ENCODE measurements at regions of chr11 and their contacts with region 1.

Region 1: GRCh38 chr11:129910360-129910759 is 15.0 kb upstream of the NFRKB start:
- DNase-seq: no peak
- ATAC-seq: no peak
- H3K4me3 Mint-ChIP-seq: no peak overlapping the region
- H3K27ac Mint-ChIP-seq: no peak overlapping the region
- H3K4me1 Mint-ChIP-seq: peaks cover 6% of the 10 kb centered on the region
- H3K27me3 Mint-ChIP-seq: no peaks in the 10 kb centered on the region

Region 2: GRCh38 chr11:129504956-129505665 is 405.2 kb before region 1 on chr11:
- CTCF ChIA-PET with region 1: no interaction called
- POLR2A ChIA-PET with region 1: no interaction called
- DNase-seq: no peak
- ATAC-seq: no peak
- H3K4me3 Mint-ChIP-seq: no peak overlapping the region
- H3K27ac Mint-ChIP-seq: no peak overlapping the region
- H3K4me1 Mint-ChIP-seq: no peaks in the 10 kb centered on the region
- H3K27me3 Mint-ChIP-seq: no peaks in the 10 kb centered on the region

Region 3: GRCh38 chr11:129922674-129923073 is 12.3 kb after region 1 on chr11:
- CTCF ChIA-PET with region 1: interaction called, 11 read pairs
- POLR2A ChIA-PET with region 1: no interaction called
- DNase-seq: no peak
- ATAC-seq: no peak
- H3K4me3 Mint-ChIP-seq: no peak overlapping the region
- H3K27ac Mint-ChIP-seq: no peak overlapping the region
- H3K4me1 Mint-ChIP-seq: peaks cover 19% of the 10 kb centered on the region
- H3K27me3 Mint-ChIP-seq: no peaks in the 10 kb centered on the region

Region 4: DNA sequence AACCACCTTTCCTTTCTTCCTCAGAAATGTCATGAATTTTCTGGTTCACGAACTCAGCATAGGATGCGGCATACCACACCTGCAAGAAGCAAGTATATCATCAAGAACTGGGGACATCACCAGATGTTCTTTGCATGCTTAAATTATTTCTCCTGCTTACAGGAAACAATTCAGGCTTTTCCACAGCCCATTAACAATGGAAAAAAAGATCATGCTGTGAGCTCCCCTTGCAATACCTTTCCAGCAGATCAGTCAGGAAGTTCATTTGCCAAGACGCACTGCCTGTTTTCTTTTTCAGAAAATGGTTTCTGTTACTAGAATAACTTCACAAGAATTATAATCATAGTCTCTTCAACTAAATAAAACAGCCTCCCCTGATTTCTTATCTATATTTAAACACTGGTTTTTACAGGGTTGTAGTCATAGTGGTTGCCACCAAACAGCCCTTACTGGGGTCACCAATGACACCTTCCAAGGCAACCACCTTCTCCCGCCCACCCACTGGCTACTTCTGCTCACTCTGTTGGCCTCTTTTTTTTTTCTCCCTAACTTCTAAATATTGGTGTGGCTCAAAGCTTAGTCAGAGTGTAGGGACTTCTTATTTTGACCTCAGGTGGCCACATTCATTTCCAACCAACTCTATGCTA is 27.4 kb after region 1 on chr11:
- CTCF ChIA-PET with region 1: no interaction called
- POLR2A ChIA-PET with region 1: no interaction called
- DNase-seq: no peak
- ATAC-seq: no peak
- H3K4me3 Mint-ChIP-seq: no peak overlapping the region
- H3K27ac Mint-ChIP-seq: no peak overlapping the region
- H3K4me1 Mint-ChIP-seq: no peaks in the 10 kb centered on the region
- H3K27me3 Mint-ChIP-seq: no peaks in the 10 kb centered on the region

Measured in activated CD8-positive, alpha-beta T cell treated with anti-CD3 and anti-CD28 coated beads, Interleukin-2, amount 10 ng/mL, durations not matched to agents 7 days and 5 days (primary cell).